Activated CD4-positive, alpha-beta T cell treated with anti-CD3 and anti-CD28 coated beads, Interleukin-2, amount 10 ng/mL, durations not matched to agents 7 days and 5 days (primary cell): ENCODE measurements at regions of chr3 and their contacts with region 1.

Region 1: DNA sequence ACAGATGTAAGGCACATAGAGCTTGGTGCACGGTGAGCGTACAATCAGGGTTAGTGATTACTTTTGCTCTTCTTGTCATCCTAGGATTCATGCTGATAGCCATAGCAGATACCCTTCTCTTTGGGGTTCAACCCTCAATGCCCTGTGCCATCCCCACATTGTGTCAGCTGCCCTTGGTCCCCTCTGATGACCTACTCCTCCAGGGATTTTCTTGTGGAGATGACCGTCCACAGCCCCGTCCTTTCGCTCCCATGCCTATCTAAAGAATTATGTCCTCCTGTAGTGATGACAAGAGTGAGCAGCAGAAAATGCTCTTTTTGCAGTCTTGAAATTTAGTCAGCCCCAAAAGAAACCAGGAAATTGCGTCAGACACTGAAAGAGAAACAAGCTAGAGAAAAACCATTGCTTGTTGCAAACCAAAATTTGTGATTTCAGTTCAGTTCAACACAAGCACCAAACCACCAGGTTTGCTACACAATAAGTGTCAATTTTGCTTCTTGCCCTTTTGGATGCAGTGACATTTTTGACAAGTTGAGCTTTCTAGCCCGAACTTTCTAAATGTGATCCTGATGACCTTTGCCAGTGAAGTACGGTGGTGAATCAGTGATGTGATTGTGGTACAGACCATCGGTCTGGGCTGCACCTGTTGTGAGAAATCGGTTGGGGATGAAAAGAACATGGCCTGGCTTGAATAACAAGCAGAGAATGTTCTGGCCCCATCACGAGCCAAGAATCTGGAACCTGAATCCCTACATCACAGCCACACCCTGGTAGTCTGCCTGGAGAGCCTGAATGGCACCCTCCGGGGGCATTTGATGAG is 41.3 kb downstream of the CMTM7 start:
- DNase-seq: peak; percentile 61
- H3K4me3 Mint-ChIP-seq: peak overlapping the region; percentile 68
- H3K27ac Mint-ChIP-seq: peak overlapping the region; percentile 98
- H3K4me1 Mint-ChIP-seq: peaks cover 90% of the 10 kb centered on the region
- H3K27me3 Mint-ChIP-seq: no peaks in the 10 kb centered on the region

Region 2: GRCh38 chr3:32421991-32422859 is 10.7 kb before region 1 on chr3:
- CTCF ChIA-PET with region 1: interaction called, 12 read pairs
- POLR2A ChIA-PET with region 1: interaction called, 3 read pairs
- DNase-seq: no peak
- H3K4me3 Mint-ChIP-seq: no peak overlapping the region
- H3K27ac Mint-ChIP-seq: peak overlapping the region; percentile 90
- H3K4me1 Mint-ChIP-seq: peaks cover 88% of the 10 kb centered on the region
- H3K27me3 Mint-ChIP-seq: no peaks in the 10 kb centered on the region